ENCODE measurements at regions of chr1 and their contacts with region 1.

Region 1: DNA sequence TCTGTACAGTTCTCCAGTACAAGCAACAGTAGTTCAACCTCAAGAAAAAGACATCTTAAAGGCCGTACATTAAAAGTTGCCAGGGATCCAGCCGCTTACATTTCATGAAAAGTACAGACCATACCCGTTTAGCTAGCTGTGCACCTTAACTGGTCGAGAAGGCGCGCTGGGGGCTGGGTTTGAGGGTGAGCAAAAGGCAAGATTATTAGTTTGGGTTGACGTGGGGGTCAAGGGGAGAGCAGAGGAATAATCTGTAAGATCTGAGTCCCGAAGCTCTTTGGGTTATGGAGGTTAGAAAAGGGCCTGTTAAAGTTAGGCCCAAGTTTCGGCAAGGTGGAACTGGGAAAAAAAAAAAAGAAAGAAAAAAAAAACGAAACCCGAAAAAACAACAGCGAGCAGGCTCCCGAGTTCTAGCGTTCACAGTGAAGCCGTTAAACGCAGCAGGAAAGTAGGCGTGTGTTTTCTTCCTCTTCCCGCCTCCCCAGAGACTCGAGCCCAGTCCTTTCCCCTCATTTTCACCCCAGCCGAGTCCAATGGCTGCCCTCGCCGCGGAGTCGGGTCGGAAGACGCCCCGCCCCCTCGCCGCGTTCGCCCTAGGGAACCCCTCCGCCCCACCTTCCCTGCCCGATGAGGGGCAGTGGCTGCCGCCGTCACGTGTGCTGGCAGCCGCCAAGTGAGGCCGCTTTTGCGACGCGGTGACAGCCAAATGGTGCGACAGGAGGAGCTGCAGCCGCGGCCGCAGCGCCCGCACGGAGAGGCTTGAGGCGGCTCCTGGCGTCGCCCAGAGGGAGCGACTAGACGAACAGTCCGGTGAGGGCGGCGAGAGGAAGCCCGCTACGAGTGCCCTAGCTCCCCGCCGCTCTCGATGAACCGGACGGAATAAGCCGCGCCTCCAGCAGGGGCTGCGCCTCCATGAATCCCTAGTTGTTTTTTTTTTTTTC is at the start of gene PKN2:
- DNase-seq: peak; percentile 99
- ATAC-seq: peak; percentile 96
- H3K4me3 Mint-ChIP-seq: peak within 1 kb of the TSS; percentile 94
- H3K27ac Mint-ChIP-seq: peak within 1 kb of the TSS; percentile 99
- H3K4me1 Mint-ChIP-seq: peaks cover 21% of the 10 kb centered on the region
- H3K27me3 Mint-ChIP-seq: no peaks in the 10 kb centered on the region
- total RNA-seq, gene PKN2: 16.4 to 24.9 TPM

Region 2: DNA sequence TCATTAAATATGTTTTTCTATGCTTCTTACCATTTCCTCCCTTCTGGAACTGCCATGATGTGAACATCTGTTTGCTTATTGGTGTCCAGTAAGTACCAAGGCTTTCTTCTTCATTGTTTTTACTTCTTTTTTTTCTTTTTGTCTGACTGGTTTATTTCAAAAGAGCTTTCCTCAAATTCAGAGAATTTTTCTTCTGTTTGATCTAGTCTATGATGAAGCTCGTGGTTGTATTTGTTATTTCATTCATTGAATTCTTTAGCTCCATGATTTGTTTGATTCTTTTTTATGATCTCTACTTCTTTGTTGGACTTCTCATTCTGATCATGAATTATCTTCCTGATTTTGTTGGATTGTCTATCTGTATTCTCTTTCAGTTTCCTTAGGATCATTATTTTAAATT is 49.3 kb before region 1 on chr1:
- CTCF ChIA-PET with region 1: no interaction called
- POLR2A ChIA-PET with region 1: no interaction called
- intact Hi-C with region 1: no loop called
- DNase-seq: no peak
- ATAC-seq: no peak
- H3K4me3 Mint-ChIP-seq: no peak overlapping the region
- H3K27ac Mint-ChIP-seq: no peak overlapping the region
- H3K4me1 Mint-ChIP-seq: no peaks in the 10 kb centered on the region
- H3K27me3 Mint-ChIP-seq: peaks cover 10% of the 10 kb centered on the region

Region 3: DNA sequence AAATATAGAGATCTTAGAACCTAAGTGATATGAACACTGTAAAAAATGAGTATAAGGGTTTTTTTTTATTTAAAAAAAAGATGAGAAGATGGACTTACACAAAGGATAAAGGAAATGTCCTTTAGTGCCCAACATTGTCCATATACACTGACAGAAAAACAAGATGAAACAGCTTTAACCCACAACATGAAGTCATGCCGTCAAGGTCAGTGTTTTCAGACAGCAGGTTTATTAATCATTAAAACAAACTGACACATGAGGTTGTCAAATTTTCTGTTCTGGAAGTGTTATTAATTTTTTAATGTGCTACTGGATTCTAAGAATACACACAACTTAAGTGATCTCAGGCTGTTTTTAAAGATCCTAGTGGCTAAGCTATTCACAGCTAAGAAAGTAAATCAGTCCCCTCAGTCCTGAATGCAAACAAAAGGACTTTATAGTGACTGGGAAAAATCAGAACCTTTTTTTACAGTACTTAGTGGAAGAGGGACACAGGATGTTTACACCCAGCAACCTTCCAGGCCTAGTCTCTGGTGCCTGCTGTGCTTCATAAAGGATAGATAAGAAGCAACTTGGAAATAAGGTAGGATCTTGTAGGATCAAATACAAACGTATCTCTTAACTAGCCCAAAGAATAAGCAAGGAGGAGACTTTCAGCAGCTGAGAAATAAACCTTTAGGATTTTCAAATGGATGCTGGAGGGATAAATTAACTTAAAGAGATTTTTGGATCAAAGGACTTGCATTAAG is 21.7 kb before region 1 on chr1:
- CTCF ChIA-PET with region 1: interaction called, 7 read pairs
- POLR2A ChIA-PET with region 1: interaction called, 4 read pairs
- intact Hi-C with region 1: loop called (anchors 1 kb)
- DNase-seq: no peak
- ATAC-seq: no peak
- H3K4me3 Mint-ChIP-seq: no peak overlapping the region
- H3K27ac Mint-ChIP-seq: peak overlapping the region; percentile 37
- H3K4me1 Mint-ChIP-seq: peaks cover 28% of the 10 kb centered on the region
- H3K27me3 Mint-ChIP-seq: no peaks in the 10 kb centered on the region

Region 4: GRCh38 chr1:88722492-88722891 is 38.7 kb after region 1 on chr1:
- CTCF ChIA-PET with region 1: no interaction called
- POLR2A ChIA-PET with region 1: no interaction called
- intact Hi-C with region 1: no loop called
- DNase-seq: no peak
- ATAC-seq: no peak
- H3K4me3 Mint-ChIP-seq: no peak overlapping the region
- H3K27ac Mint-ChIP-seq: no peak overlapping the region
- H3K4me1 Mint-ChIP-seq: peaks cover 41% of the 10 kb centered on the region
- H3K27me3 Mint-ChIP-seq: no peaks in the 10 kb centered on the region

Region 5: GRCh38 chr1:89149229-89149628 is 465.4 kb after region 1 on chr1:
- CTCF ChIA-PET with region 1: no interaction called
- POLR2A ChIA-PET with region 1: no interaction called
- intact Hi-C with region 1: no loop called
- DNase-seq: no peak
- ATAC-seq: no peak
- H3K4me3 Mint-ChIP-seq: no peak overlapping the region
- H3K27ac Mint-ChIP-seq: no peak overlapping the region
- H3K4me1 Mint-ChIP-seq: peaks cover 16% of the 10 kb centered on the region
- H3K27me3 Mint-ChIP-seq: peaks cover 12% of the 10 kb centered on the region